ENCODE measurements at regions of chr20 and their contacts with region 1.

Region 1: DNA sequence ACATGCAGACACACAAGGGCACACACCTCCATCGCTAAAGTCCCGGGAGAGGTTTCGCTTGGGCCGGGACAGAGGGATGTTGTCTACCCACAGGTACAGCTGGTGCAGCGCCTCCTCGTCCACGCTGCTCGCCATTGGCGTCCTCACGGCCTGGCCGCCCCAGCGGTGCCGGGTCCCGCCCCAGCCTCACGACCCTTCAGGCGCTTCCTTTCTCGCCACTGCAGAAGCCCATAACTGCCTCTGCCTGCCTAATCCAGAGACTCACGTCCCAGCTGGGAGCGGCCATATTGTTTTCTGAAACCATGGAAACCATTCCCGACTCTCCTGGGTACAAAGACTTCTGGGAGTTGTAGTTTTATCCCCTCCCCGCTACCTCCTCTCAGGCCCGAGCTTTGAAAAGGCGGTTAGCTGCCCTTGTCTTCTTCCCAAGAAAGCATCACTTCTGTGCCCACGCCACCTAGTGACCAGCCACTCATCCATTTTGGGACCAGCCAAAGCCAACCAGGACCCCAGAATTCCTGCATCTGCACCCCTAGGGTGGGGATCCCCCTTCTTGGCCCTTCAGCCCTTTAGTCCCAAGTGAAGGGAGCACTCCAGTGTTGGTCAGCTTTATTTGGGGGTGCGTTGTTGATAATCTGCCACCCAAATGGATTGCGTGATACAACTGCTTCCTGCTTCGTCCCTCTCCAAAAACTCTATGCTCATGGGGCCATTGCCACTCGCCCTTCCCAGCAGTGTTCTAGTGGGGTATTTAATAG is at the start of gene SPEF1:
- DNase-seq: peak; percentile 81 to 93 (median 84)
- ATAC-seq: peak; percentile 77
- H3K4me3 ChIP-seq: peak within 1 kb of the TSS in 1 of 2 donors; percentile 29
- H3K27ac ChIP-seq: peak within 1 kb of the TSS in 1 of 2 donors; percentile 77
- H3K4me1 ChIP-seq: peaks cover 22 to 75% of the 10 kb centered on the region in 2 donors
- H3K27me3 ChIP-seq: peaks cover 0 to 18% of the 10 kb centered on the region in 2 donors
- CTCF ChIP-seq: peak; percentile 17 to 28
- polyA plus RNA-seq, gene SPEF1: 0.63 to 4.0 (median 1.9) TPM

Region 2: DNA sequence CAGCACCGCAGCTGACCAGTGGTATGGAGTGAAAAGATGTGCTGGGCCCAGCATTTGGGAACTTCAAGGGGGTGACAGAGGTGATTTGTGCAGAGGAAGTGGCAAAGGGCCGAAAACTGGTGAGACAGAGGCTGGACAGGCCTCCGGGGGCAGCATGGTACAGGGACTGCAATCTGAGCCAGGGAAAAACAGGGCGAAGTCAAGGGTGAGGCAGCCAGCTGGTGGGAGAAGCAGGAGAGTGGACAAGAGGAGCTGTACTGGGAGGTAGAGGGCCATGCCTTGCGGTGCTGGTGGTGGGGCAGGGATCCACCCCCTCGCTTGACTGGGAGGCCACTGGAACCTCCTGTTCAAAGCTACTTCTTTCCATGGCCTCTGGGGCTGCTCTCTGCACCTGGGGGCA is 110.8 kb before region 1 on chr20:
- intact Hi-C with region 1: no loop called
- DNase-seq: no peak
- ATAC-seq: no peak
- H3K4me3 ChIP-seq: no peak overlapping the region
- H3K27ac ChIP-seq: no peak overlapping the region
- H3K4me1 ChIP-seq: peaks cover 2 to 14% of the 10 kb centered on the region in 2 donors
- H3K27me3 ChIP-seq: peaks cover 30 to 82% of the 10 kb centered on the region in 2 donors
- CTCF ChIP-seq: no peak

Region 3: DNA sequence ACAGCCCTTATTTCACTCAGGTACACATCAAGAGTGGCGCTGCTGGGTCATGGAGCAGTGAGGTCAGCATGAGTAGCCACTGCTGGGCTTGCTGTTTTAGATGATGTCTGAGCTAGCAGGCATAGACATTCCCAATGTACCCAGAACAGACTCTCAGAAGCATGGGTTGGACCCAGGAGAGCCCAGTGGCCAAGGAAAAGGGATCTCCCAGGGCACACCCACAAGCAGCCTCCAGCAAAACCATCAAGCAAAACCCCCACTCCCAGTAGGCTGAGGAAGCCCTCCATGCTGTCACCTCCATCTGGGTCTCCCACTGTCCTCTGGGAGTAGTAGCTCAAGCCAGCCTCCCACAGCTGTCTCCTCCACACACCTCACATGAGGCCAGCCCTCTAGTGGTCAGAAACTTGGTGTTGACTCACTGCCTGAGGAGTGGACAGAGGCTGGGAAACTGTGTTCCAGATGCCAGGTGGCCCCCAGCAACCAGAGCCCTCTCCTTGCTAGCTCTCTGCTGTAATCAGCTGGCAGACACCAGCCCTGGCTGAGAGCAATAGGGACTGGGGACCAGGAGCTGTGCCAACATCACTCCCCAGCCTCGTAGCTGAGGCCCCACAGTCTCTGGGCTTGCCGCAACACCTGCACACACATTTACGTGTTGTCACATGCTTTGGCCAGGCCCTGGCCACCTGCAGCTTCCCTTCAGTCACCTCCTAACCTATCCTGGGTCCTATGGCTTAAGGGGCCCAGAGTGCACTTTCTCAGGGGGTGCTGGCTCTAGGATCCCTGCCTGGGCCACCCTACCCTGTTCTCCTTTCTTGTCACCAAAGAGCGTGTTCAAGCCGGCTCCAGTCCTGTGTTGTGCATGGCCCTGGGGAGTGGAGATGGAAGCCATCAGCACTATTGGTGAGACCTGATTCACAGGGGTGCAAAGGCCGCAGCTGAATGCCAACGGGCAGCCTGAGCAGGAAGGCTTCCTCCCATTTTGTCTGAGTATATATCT is 37.1 kb after region 1 on chr20:
- intact Hi-C with region 1: loop called in 1 of 2 experiments (anchors 5 kb)
- DNase-seq: peak in 3 of 4 donors; percentile 51 to 80 (median 78)
- ATAC-seq: peak; percentile 51
- H3K4me3 ChIP-seq: no peak overlapping the region
- H3K27ac ChIP-seq: peak overlapping the region; percentile 54 to 58
- H3K4me1 ChIP-seq: peaks cover 14 to 53% of the 10 kb centered on the region in 2 donors
- H3K27me3 ChIP-seq: no peaks in the 10 kb centered on the region
- CTCF ChIP-seq: peak; percentile 59 to 70